CD8-positive, alpha-beta T cell (primary cell): ENCODE measurements at regions of chr2 and their contacts with region 1.

Region 1: DNA sequence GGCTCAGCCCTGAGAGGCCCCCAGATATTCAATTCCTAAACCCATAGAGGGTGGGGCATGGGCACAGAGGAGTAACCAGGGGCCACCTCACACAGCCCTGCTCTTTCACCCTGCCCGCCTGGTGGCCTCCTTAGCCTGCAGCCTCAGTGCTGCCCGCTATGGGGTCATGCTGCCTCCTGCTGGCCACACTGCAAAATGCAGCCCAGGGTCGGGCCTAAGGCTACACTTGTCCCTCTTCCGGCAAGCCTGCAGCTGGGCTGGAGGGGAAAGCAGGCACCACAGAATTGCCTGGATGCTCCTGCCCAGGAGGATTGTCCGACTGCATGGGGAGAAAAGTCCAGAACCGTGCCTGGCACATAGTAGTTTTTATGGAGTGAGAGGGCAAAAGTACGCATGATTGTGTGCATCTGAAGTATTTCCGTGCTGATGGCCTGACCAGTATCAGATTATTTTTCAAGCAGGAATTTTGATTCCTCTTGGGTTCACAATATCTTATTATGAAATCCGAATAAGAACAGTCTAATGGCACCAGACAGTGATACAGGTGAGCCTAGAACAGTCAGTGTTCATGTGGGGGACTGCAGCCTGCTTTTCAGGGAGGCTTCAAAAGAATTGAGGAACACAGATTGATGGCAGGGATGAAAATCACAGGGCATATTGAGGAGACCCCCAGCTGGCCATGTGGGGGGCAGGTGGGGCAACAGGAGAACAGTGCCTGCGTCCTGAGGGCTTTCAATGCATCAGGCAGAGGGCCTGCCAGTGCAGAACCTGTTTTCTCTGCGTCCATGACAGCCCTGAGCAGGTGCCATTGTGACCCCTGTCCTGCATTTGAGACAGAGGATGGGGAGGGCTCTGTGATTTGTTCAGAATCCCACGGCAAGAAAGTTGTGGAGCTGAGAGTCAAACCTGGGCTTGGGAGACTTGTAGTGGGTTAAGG is 51.2 kb upstream of the ALPP start:
- DNase-seq: peak; percentile 74 to 94 (median 82)
- ATAC-seq: peak; percentile 88
- H3K4me3 ChIP-seq: no peak overlapping the region
- H3K4me3 Mint-ChIP-seq: no peak overlapping the region
- H3K27ac ChIP-seq: no peak overlapping the region
- H3K27ac Mint-ChIP-seq: no peak overlapping the region
- H3K4me1 ChIP-seq: peaks cover 28% of the 10 kb centered on the region
- H3K4me1 Mint-ChIP-seq: peaks cover 31% of the 10 kb centered on the region
- H3K27me3 ChIP-seq: no peaks in the 10 kb centered on the region
- H3K27me3 Mint-ChIP-seq: no peaks in the 10 kb centered on the region
- CTCF ChIP-seq: peak; percentile 95

Region 2: GRCh38 chr2:231900486-231900942 is 426.9 kb before region 1 on chr2:
- CTCF ChIA-PET with region 1: interaction called, 34 read pairs
- POLR2A ChIA-PET with region 1: no interaction called
- intact Hi-C with region 1: no loop called
- DNase-seq: peak; percentile 19 to 60 (median 41)
- ATAC-seq: peak; percentile 26
- H3K4me3 ChIP-seq: no peak overlapping the region
- H3K4me3 Mint-ChIP-seq: no peak overlapping the region
- H3K27ac ChIP-seq: no peak overlapping the region
- H3K27ac Mint-ChIP-seq: no peak overlapping the region
- H3K4me1 ChIP-seq: no peaks in the 10 kb centered on the region
- H3K4me1 Mint-ChIP-seq: no peaks in the 10 kb centered on the region
- H3K27me3 ChIP-seq: no peaks in the 10 kb centered on the region
- H3K27me3 Mint-ChIP-seq: no peaks in the 10 kb centered on the region
- CTCF ChIP-seq: peak; percentile 75

Region 3: DNA sequence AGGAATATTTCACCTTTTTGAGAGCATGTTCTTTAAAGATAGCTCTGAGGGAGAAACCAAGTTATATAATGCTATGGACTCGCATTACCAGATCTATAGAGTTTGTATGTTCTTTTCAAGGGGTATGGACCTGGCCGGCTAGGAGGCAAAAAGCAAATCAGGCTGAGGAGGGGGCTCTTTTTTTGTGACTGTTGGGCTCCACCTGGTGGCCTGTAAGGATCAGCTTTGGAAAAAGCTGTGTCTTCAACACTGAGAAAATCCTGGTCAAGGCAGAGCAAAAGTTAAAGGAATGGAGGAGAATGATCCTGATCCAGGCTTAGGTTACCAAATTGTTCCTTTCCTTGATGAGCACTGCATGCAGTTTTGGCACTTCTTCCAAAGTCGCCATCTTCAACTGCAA is 185.3 kb before region 1 on chr2:
- CTCF ChIA-PET with region 1: interaction called, 11 read pairs
- POLR2A ChIA-PET with region 1: no interaction called
- intact Hi-C with region 1: loop called (anchors 5 kb)
- DNase-seq: peak in 4 of 9 experiments; percentile 11 to 47 (median 26)
- ATAC-seq: no peak
- H3K4me3 ChIP-seq: no peak overlapping the region
- H3K4me3 Mint-ChIP-seq: no peak overlapping the region
- H3K27ac ChIP-seq: no peak overlapping the region
- H3K27ac Mint-ChIP-seq: no peak overlapping the region
- H3K4me1 ChIP-seq: peaks cover 34% of the 10 kb centered on the region
- H3K4me1 Mint-ChIP-seq: peaks cover 45% of the 10 kb centered on the region
- H3K27me3 ChIP-seq: no peaks in the 10 kb centered on the region
- H3K27me3 Mint-ChIP-seq: no peaks in the 10 kb centered on the region
- CTCF ChIP-seq: peak; percentile 65

Region 4: GRCh38 chr2:232265329-232265728 is 62.0 kb before region 1 on chr2:
- CTCF ChIA-PET with region 1: interaction called, 5 read pairs
- POLR2A ChIA-PET with region 1: no interaction called
- intact Hi-C with region 1: loop called (anchors 1 to 10 kb)
- DNase-seq: no peak
- ATAC-seq: no peak
- H3K4me3 ChIP-seq: no peak overlapping the region
- H3K4me3 Mint-ChIP-seq: no peak overlapping the region
- H3K27ac ChIP-seq: no peak overlapping the region
- H3K27ac Mint-ChIP-seq: peak overlapping the region; percentile 68
- H3K4me1 ChIP-seq: no peaks in the 10 kb centered on the region
- H3K4me1 Mint-ChIP-seq: no peaks in the 10 kb centered on the region
- H3K27me3 ChIP-seq: no peaks in the 10 kb centered on the region
- H3K27me3 Mint-ChIP-seq: no peaks in the 10 kb centered on the region
- CTCF ChIP-seq: no peak

Region 5: DNA sequence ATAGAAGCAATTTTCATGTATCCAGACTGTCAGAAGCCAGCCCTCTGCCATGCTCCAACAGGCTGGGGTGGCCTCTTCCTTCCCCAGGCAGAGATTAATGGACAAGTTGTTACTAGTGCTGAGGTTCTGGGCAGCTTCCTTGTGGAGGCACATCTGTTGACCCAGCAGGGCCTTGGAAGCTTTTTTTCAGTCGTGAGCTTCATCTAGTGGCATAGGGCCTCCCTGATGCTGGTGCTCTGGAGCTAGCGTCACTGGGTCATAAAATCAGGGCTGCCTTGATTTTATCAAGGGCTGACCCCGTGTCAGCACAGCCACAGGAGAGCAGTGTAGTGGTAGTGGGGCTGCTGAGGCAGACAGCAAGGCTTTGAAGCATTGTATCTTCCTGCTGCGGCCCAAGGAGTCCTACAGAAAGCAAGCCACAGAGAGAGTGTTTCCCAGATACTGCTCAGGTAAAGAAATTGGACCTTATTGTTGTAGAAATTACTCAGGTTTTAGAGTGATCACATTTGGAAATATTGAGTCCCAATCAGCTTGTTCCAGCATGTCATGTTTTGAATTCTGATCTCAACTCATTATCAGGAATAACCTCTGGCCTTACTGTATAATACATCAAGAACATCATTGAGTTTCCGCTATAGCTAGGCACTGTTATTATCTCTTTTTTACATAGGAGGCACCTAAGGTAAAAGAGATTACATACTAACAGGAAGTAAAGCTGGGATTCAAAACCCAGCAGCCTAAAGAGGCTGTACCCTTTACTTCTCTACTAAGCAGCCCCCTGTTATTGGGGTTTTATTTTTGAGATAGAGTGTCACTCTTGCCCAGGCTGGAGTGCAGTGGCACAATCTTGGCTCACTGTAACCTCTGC is 41.1 kb before region 1 on chr2:
- CTCF ChIA-PET with region 1: interaction called, 68 read pairs
- POLR2A ChIA-PET with region 1: no interaction called
- intact Hi-C with region 1: loop called in 1 of 2 experiments (anchors 5 kb)
- DNase-seq: peak in 1 of 9 experiments; percentile 28
- ATAC-seq: peak; percentile 63
- H3K4me3 ChIP-seq: no peak overlapping the region
- H3K4me3 Mint-ChIP-seq: peak overlapping the region; percentile 26
- H3K27ac ChIP-seq: peak overlapping the region; percentile 13 to 62
- H3K27ac Mint-ChIP-seq: peak overlapping the region; percentile 94
- H3K4me1 ChIP-seq: peaks cover 47% of the 10 kb centered on the region
- H3K4me1 Mint-ChIP-seq: peaks cover 57% of the 10 kb centered on the region
- H3K27me3 ChIP-seq: no peaks in the 10 kb centered on the region
- H3K27me3 Mint-ChIP-seq: no peaks in the 10 kb centered on the region
- CTCF ChIP-seq: no peak

Region 6: GRCh38 chr2:232315049-232315922 is 12.1 kb before region 1 on chr2:
- CTCF ChIA-PET with region 1: interaction called, 104 read pairs
- POLR2A ChIA-PET with region 1: interaction called, 10 read pairs
- intact Hi-C with region 1: no loop called
- DNase-seq: peak; percentile 45 to 91 (median 79)
- ATAC-seq: peak; percentile 83
- H3K4me3 ChIP-seq: peak overlapping the region; percentile 1 to 36
- H3K4me3 Mint-ChIP-seq: peak overlapping the region; percentile 61
- H3K27ac ChIP-seq: peak overlapping the region; percentile 49 to 80
- H3K27ac Mint-ChIP-seq: peak overlapping the region; percentile 96
- H3K4me1 ChIP-seq: peaks cover 97% of the 10 kb centered on the region
- H3K4me1 Mint-ChIP-seq: peaks cover 95% of the 10 kb centered on the region
- H3K27me3 ChIP-seq: no peaks in the 10 kb centered on the region
- H3K27me3 Mint-ChIP-seq: no peaks in the 10 kb centered on the region
- CTCF ChIP-seq: peak; percentile 48

Region 7: DNA sequence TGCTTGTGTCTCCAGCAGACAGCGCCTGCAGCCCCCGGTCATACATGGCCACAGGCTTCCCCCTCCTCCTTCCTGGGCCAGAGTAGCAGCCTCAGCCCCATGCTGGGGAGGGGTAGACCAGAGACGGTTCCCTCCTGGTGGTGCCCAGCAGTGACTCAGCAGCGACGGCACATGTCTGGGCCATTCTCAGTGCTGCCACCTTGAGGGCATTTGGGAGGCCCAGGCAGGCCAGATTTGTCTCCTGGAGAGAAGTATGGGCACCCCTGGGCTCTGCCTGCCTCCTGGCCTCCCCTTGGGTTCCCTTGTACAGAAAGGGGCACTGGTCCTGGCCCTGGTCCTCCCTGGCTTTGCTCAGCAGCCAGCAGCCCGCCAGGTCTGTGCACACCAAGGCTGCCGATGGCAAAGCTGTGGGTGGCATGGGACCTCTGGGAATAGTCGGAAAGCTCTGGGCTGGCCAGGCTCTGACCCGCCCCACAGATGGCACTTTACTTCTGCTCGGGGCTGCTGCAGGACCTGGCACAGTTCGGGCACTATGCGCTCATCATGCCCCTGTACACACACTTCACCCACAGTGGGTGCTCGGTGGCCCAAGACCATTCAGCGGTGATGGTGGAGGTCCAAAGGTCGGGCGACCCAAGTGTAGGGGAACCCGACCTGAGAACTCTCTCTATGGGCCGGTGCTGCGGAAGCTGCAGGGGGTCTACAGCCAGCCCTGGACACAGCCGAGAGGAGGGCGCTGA is 117.2 kb after region 1 on chr2:
- CTCF ChIA-PET with region 1: no interaction called
- POLR2A ChIA-PET with region 1: no interaction called
- intact Hi-C with region 1: loop called in 1 of 2 experiments (anchors 5 kb)
- DNase-seq: peak in 8 of 9 experiments; percentile 34 to 70 (median 56)
- ATAC-seq: peak; percentile 29
- H3K4me3 ChIP-seq: no peak overlapping the region
- H3K4me3 Mint-ChIP-seq: no peak overlapping the region
- H3K27ac ChIP-seq: no peak overlapping the region
- H3K27ac Mint-ChIP-seq: no peak overlapping the region
- H3K4me1 ChIP-seq: no peaks in the 10 kb centered on the region
- H3K4me1 Mint-ChIP-seq: peaks cover 12% of the 10 kb centered on the region
- H3K27me3 ChIP-seq: no peaks in the 10 kb centered on the region
- H3K27me3 Mint-ChIP-seq: no peaks in the 10 kb centered on the region
- CTCF ChIP-seq: peak; percentile 57